ENCODE measurements at regions of chr2 and their contacts with region 1.

Region 1: GRCh38 chr2:65320042-65320725 is 92.6 kb downstream of the ACTR2 start:
- DNase-seq: no peak
- H3K4me3 Mint-ChIP-seq: no peak overlapping the region
- H3K27ac Mint-ChIP-seq: no peak overlapping the region
- H3K4me1 Mint-ChIP-seq: peaks cover 11% of the 10 kb centered on the region
- H3K27me3 Mint-ChIP-seq: no peaks in the 10 kb centered on the region

Region 2: DNA sequence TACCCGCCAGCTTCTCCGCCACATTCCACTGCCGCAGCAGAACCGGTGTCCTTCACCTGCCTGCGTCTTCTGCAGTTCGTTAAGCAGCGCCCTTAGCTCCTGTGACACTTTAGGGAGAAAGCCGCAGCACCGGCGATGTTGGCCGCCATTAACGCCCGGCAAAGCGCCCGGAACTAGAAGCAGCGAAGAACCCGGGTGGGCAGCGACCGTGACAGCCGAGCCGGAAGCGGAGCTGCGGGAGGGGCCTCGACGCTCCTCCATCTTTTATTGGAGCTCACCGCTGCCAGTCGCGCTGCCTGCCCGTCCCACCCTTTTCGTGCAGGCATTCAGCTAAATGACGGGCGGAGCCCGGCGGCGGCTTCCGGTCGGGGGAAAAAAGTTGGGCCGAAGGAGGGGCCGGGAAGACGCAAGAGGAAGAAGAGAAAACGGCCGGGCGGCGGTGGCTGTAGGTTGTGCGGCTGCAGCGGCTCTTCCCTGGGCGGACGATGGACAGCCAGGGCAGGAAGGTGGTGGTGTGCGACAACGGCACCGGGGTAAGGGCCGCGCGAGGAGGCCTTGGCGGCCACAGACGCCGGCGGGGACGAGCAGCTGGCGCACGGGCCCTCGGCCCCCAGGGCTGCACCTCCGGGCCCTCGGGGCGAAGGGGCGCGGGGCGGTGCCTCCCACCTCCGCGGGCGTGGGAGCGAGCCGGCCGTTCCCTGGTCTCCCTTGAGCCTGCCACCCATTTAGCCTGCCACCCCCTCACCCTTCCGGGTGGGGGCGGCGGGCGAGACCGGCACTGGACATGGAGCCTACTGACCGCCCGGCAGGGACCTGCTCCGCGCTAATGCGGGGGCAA is 92.5 kb before region 1 on chr2 and contains the start of gene ACTR2:
- CTCF ChIA-PET with region 1: no interaction called
- intact Hi-C with region 1: loop called (anchors 1 kb)
- DNase-seq: peak; percentile 96
- H3K4me3 Mint-ChIP-seq: peak within 1 kb of the TSS; percentile 98
- H3K27ac Mint-ChIP-seq: peak within 1 kb of the TSS; percentile 99
- H3K4me1 Mint-ChIP-seq: peaks cover 41% of the 10 kb centered on the region
- H3K27me3 Mint-ChIP-seq: no peaks in the 10 kb centered on the region
- total RNA-seq, gene ACTR2: 358 to 366 TPM

Region 3: GRCh38 chr2:65366595-65367125 is 46.5 kb after region 1 on chr2:
- CTCF ChIA-PET with region 1: no interaction called
- intact Hi-C with region 1: loop called (anchors 1 kb)
- DNase-seq: peak; percentile 64
- H3K4me3 Mint-ChIP-seq: no peak overlapping the region
- H3K27ac Mint-ChIP-seq: no peak overlapping the region
- H3K4me1 Mint-ChIP-seq: peaks cover 13% of the 10 kb centered on the region
- H3K27me3 Mint-ChIP-seq: no peaks in the 10 kb centered on the region

Region 4: GRCh38 chr2:65866148-65866547 is 546.0 kb after region 1 on chr2:
- CTCF ChIA-PET with region 1: no interaction called
- intact Hi-C with region 1: no loop called
- DNase-seq: no peak
- H3K4me3 Mint-ChIP-seq: no peak overlapping the region
- H3K27ac Mint-ChIP-seq: no peak overlapping the region
- H3K4me1 Mint-ChIP-seq: no peaks in the 10 kb centered on the region
- H3K27me3 Mint-ChIP-seq: no peaks in the 10 kb centered on the region

Region 5: GRCh38 chr2:66084948-66085590 is 764.9 kb after region 1 on chr2:
- CTCF ChIA-PET with region 1: no interaction called
- intact Hi-C with region 1: no loop called
- DNase-seq: no peak
- H3K4me3 Mint-ChIP-seq: no peak overlapping the region
- H3K27ac Mint-ChIP-seq: no peak overlapping the region
- H3K4me1 Mint-ChIP-seq: no peaks in the 10 kb centered on the region
- H3K27me3 Mint-ChIP-seq: no peaks in the 10 kb centered on the region